Calu3 (cell line): ENCODE measurements at regions of chrX and their contacts with region 1.

Region 1: DNA sequence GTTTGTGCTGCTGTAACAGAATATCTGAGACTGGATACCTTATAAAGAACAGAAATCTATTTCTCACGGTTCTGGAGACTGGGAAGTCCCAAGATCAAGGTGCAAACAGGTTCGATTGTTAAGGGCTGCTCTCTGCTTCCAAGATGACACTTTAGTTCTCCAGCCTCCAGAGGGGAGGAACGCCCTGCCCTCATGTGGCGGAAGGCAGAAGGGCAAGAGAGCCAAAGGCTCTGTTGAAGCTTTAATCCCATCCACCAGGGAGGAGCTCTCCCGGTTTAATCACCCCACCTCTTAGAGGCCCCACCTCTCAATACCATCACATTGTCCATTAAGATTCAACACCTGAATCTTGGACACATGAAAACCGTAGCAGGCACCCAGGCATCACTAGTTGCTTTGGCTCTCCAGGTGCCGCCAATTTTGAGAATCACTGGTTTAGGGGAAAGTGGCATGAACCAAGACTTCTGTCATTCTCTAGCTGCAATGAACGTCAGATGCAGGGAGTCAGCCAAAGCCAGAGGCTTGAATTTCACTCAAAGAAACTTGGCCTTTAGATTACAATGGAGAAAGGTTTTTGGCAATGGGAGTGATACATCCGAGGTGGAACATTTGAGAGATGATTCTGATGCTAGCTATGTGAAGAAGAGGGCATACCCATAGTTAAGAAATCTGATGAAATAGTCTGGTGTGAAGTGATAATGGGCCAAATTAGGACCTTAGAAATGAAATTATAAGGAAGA is 15.7 kb downstream of the FHL1 start:
- DNase-seq: peak; percentile 63
- H3K4me3 Mint-ChIP-seq: no peak overlapping the region
- H3K27ac Mint-ChIP-seq: no peak overlapping the region
- H3K4me1 Mint-ChIP-seq: peaks cover 9% of the 10 kb centered on the region
- H3K27me3 Mint-ChIP-seq: peaks cover 54% of the 10 kb centered on the region
- CTCF ChIP-seq: peak; percentile 52

Region 2: DNA sequence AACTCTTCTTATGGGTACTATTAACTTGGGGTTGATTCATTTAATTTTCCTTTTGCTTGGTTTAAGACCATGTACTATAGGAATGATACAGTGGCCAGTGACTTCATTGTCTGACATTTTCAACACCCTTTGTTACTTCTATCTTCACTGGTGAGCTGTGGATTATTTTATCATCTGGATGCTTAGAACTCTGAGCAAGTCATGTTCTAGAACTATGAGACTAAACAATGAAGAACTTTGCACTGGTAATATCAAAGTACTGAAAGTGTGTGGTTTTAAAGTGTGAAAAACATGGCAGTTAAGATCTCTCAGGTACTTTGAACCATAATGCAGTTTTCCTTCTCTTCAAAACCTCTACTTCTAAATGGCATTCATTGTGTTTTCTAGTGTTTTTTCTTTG is 40.4 kb after region 1 on chrX:
- CTCF ChIA-PET with region 1: interaction called, 4 read pairs
- intact Hi-C with region 1: loop called (anchors 2 kb)
- DNase-seq: no peak
- H3K4me3 Mint-ChIP-seq: no peak overlapping the region
- H3K27ac Mint-ChIP-seq: no peak overlapping the region
- H3K4me1 Mint-ChIP-seq: peaks cover 7% of the 10 kb centered on the region
- H3K27me3 Mint-ChIP-seq: no peaks in the 10 kb centered on the region
- CTCF ChIP-seq: no peak

Region 3: GRCh38 chrX:136268051-136269048 is 105.3 kb after region 1 on chrX:
- CTCF ChIA-PET with region 1: no interaction called
- intact Hi-C with region 1: loop called (anchors 1 kb)
- DNase-seq: peak; percentile 43
- H3K4me3 Mint-ChIP-seq: no peak overlapping the region
- H3K27ac Mint-ChIP-seq: no peak overlapping the region
- H3K4me1 Mint-ChIP-seq: no peaks in the 10 kb centered on the region
- H3K27me3 Mint-ChIP-seq: no peaks in the 10 kb centered on the region
- CTCF ChIP-seq: peak; percentile 39

Region 4: GRCh38 chrX:136488706-136489105 is 325.7 kb after region 1 on chrX:
- CTCF ChIA-PET with region 1: no interaction called
- intact Hi-C with region 1: loop called (anchors 10 kb)
- DNase-seq: no peak
- H3K4me3 Mint-ChIP-seq: no peak overlapping the region
- H3K27ac Mint-ChIP-seq: no peak overlapping the region
- H3K4me1 Mint-ChIP-seq: no peaks in the 10 kb centered on the region
- H3K27me3 Mint-ChIP-seq: peaks cover 73% of the 10 kb centered on the region
- CTCF ChIP-seq: no peak